MCF 10A (cell line): ENCODE measurements at regions of chr5 and their contacts with region 1.

Region 1: GRCh38 chr5:157476702-157477408 is 16.8 kb downstream of the NIPAL4 start:
- DNase-seq: peak; percentile 93
- H3K4me3 Mint-ChIP-seq: no peak overlapping the region
- H3K27ac Mint-ChIP-seq: no peak overlapping the region
- H3K4me1 Mint-ChIP-seq: no peaks in the 10 kb centered on the region
- H3K27me3 Mint-ChIP-seq: no peaks in the 10 kb centered on the region
- CTCF ChIP-seq: peak; percentile 97

Region 2: DNA sequence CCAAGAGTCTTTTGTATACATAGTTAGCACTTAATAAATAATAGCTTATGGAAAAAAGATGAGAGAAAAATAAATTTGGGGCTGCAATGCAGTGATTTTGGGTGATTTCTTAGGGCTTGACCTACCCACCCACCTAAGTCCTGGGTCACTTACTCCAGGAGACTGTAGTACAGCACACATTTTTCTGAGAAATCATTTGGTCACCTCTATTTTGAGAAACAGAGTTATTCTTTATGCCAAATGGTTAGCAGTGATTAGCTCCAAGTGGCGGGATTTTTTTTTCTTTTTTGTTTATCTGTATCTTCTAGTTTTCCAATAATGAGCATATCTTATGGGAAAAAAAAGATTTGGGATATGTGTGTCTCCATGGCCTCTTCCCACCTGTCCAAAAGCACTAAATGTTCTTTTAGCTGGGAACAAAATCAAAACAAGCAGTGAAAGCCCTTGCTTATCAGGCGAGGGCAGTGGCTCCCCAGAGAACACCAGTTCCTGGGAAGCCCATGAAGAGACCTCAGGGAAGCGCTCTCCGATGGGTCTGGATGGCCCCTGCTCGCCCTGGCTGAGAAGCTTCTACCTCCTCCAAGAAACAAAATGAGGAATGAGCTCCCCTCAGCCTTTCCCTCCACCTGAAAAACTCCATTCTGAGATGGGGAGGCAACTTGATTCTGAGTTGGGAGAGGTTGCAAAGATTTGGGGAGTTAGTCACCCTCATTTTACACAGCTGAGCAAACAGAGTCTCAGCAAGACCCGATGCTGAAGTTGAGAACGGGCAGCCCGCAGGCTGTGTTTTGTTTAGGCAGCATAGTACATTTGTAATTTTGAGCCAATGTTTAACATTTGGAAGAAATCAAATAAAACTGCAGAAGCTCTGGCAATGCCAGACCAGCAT is 141.1 kb before region 1 on chr5:
- CTCF ChIA-PET with region 1: interaction called, 178 read pairs
- POLR2A ChIA-PET with region 1: no interaction called
- intact Hi-C with region 1: no loop called
- DNase-seq: no peak
- H3K4me3 Mint-ChIP-seq: no peak overlapping the region
- H3K27ac Mint-ChIP-seq: no peak overlapping the region
- H3K4me1 Mint-ChIP-seq: no peaks in the 10 kb centered on the region
- H3K27me3 Mint-ChIP-seq: no peaks in the 10 kb centered on the region
- CTCF ChIP-seq: no peak

Region 3: DNA sequence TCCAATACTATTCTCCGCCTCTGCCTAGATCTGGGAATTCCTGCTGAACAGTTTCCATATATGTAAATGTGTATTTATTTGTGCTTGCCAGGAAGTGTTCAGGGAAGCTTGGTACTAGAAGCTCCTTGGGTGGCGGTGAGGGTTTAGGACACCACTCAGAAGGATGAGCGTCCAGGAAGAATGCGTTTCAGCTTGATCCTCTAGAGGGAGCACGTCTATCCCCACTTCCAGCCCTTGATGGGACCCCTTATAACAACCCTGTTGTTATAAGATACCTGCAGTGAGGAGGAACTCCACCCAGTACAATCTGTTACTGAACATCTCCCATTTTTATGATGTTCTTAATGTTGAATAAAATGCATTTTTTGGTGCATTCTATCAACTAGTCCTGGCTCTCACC is 122.1 kb before region 1 on chr5:
- CTCF ChIA-PET with region 1: interaction called, 18 read pairs
- POLR2A ChIA-PET with region 1: no interaction called
- intact Hi-C with region 1: no loop called
- DNase-seq: peak; percentile 19
- H3K4me3 Mint-ChIP-seq: no peak overlapping the region
- H3K27ac Mint-ChIP-seq: no peak overlapping the region
- H3K4me1 Mint-ChIP-seq: no peaks in the 10 kb centered on the region
- H3K27me3 Mint-ChIP-seq: no peaks in the 10 kb centered on the region
- CTCF ChIP-seq: peak; percentile 30

Region 4: DNA sequence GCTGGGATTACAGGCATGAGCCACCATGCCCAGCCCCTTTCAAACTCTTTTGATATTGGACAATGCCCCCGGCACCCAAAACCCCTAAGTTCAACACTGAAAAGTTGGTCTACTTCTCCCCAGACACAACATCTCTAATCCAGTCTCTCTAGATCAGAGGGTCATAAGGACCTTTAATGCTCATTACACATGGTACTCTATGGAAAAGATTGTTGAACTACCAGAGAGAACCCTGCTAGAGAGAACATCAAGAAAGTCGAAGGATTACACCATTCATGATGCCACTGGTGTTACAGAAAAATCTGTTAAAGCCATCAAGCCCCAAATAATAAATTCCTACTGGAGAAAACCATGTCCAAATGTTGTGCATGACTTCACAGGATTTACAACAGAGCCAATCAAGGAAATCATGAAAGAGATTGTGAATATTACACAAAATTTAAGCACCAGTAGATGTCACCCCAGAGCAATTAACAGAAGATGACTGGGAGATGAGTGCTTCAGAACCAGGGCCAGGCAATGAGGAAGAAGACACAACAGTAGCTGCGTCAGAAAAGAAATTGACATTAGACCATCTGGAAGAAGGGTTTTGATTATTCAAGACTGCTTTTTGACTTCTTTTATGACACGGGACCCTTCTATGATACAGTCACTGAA is 45.2 kb before region 1 on chr5:
- CTCF ChIA-PET with region 1: interaction called, 642 read pairs
- POLR2A ChIA-PET with region 1: interaction called, 10 read pairs
- intact Hi-C with region 1: loop called (anchors 1 kb)
- DNase-seq: peak; percentile 82
- H3K4me3 Mint-ChIP-seq: no peak overlapping the region
- H3K27ac Mint-ChIP-seq: no peak overlapping the region
- H3K4me1 Mint-ChIP-seq: no peaks in the 10 kb centered on the region
- H3K27me3 Mint-ChIP-seq: no peaks in the 10 kb centered on the region
- CTCF ChIP-seq: peak; percentile 69

Region 5: DNA sequence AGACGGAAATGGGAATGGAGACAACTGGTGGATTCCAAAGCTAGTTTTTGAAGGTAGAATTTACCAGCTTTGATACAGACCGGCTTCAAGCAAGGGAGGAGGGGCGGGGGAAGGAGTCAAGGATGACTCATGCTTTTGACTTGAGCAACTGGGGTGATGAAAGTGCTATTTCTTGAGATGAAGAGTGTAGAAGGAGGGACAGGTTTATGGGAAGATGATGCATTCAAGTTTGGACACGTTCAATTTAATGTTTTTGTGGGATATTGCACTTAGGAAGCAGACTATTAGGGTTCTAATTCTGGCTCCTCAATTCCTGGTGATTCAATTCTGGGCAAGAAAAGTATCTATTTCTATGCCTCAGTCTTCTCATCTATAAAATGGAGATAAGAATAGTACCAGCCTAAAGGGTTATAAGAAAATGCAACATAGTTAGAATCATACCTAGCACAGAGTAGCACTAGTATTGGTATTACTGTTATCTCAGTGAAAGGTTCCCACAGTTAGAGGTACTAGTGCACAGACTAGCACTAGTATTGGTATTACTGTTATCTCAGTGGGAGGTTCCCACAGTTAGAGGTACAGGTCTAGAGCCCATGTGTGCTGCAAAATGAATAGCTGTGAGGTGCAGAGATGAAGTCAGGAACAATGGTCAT is 12.2 kb before region 1 on chr5:
- CTCF ChIA-PET with region 1: interaction called, 73 read pairs
- POLR2A ChIA-PET with region 1: interaction called, 7 read pairs
- intact Hi-C with region 1: no loop called
- DNase-seq: peak; percentile 99
- H3K4me3 Mint-ChIP-seq: peak overlapping the region; percentile 11
- H3K27ac Mint-ChIP-seq: peak overlapping the region; percentile 69
- H3K4me1 Mint-ChIP-seq: peaks cover 38% of the 10 kb centered on the region
- H3K27me3 Mint-ChIP-seq: no peaks in the 10 kb centered on the region
- CTCF ChIP-seq: no peak